ENCODE measurements at regions of chr6 and their contacts with region 1.

Region 1: GRCh38 chr6:41735427-41736356 is at the start of gene TFEB:
- DNase-seq: peak; percentile 95 to 99 (median 98)
- ATAC-seq: peak; percentile 69 to 79
- H3K4me3 ChIP-seq: peak within 1 kb of the TSS; percentile 94
- H3K27ac ChIP-seq: peak within 1 kb of the TSS; percentile 95
- H3K4me1 ChIP-seq: peaks cover 17% of the 10 kb centered on the region
- H3K27me3 ChIP-seq: no peaks in the 10 kb centered on the region
- total RNA-seq, gene TFEB: 31.6 to 51.1 (median 46.2) TPM

Region 2: GRCh38 chr6:41705996-41706835 is 29.5 kb before region 1 on chr6:
- intact Hi-C with region 1: loop called in 2 of 4 experiments (anchors 2 kb)
- DNase-seq: peak; percentile 81 to 92 (median 92)
- ATAC-seq: peak; percentile 86 to 89
- H3K4me3 ChIP-seq: no peak overlapping the region
- H3K27ac ChIP-seq: peak overlapping the region; percentile 59
- H3K4me1 ChIP-seq: peaks cover 19% of the 10 kb centered on the region
- H3K27me3 ChIP-seq: no peaks in the 10 kb centered on the region